ENCODE measurements at regions of chr17 and their contacts with region 1.

Region 1: GRCh38 chr17:62935523-62935922 is 30.5 kb upstream of the TANC2 start:
- DNase-seq: no peak
- H3K4me3 ChIP-seq: no peak overlapping the region
- H3K27ac ChIP-seq: no peak overlapping the region
- H3K4me1 ChIP-seq: no peaks in the 10 kb centered on the region
- H3K27me3 ChIP-seq: no peaks in the 10 kb centered on the region
- CTCF ChIP-seq: no peak

Region 2: GRCh38 chr17:62916681-62917571 is 18.6 kb before region 1 on chr17:
- CTCF ChIA-PET with region 1: no interaction called
- POLR2A ChIA-PET with region 1: interaction called, 34 read pairs
- intact Hi-C with region 1: no loop called
- DNase-seq: no peak
- H3K4me3 ChIP-seq: no peak overlapping the region
- H3K27ac ChIP-seq: no peak overlapping the region
- H3K4me1 ChIP-seq: peaks cover 8% of the 10 kb centered on the region
- H3K27me3 ChIP-seq: no peaks in the 10 kb centered on the region
- CTCF ChIP-seq: no peak

Measured in PC-9 (cell line).